Posterior cingulate gyrus (tissue), 11 donors: ENCODE measurements at regions of chr6 and their contacts with region 1.

Region 1: DNA sequence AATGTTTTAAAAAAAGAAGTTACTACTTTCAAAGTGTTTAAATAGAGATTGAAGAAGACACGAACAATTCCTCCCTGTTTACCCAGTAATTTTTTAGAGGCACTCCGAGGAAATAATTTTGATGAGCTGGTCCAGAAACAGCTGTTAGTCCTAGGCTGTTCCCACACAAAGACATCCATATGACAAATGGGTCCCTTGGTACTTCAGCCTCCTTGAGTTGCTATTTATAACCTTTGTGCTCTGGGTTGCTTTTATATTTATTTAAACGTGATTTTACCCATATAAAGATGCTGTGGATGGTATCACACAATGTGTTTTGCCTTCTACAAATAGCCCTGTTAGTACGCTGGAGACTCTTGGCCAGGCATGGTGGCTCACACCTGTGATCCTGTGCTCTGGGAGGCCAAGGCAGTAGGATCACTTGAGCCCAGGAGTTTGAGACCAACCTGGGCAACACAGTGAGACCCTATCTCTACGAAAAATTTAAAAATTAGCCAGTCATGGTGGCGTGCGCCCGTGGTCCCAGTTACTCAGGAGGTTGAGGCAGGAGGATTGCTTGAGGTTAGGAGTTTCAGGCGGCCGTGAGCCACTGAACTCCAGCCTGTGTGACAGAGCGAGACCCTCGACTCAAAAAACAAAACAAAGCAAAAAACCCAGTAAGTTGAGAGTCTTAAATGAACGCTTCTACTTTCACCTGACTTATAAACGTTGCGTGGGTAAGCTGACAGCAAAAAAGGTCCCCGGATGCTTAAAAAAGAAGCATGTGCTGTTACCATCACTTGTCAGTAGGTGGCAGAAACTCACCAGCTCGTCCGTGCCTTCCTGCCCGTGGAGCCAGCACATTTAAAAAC is 56.9 kb upstream of the ARMH2 start:
- DNase-seq: peak in 8 of 10 donors; percentile 34 to 93 (median 48)

Region 2: GRCh38 chr6:24910961-24911712 is 55.5 kb after region 1 on chr6:
- intact Hi-C with region 1: loop called (anchors 5 kb)
- DNase-seq: peak in 9 of 10 donors; percentile 44 to 95 (median 73)

Region 3: DNA sequence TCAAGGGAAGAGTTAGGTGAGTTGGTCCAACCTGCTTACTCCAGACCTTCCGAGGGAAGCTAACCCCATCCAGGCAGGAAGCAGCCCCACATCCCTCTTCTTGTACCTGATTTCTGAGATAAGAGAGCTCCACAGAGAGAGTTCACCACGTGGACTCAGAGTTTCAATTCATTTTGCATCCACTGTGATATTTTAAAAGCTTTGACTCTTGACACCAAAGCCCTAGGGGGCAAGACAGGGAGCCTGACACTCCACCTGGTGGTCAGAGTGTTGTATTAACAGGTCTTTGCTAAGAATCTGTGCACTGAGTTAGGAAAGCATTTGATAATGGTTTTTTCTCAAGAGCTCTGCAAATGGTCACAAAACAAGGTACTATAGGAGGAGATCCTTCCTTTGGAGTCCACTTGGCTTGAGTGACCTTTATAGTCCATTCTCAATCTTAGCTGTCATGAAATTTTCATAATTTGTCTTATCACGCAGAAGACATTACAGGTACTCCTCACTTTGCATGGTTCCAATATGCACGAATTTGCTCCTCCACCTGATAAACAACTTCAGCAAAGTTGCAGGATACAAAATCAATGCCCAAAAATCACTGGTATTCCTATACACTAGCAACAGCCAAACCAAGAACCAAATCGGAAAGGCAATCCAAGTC is 136.3 kb after region 1 on chr6:
- intact Hi-C with region 1: loop called (anchors 5 kb)
- DNase-seq: peak in 1 of 10 donors; percentile 11

Region 4: GRCh38 chr6:25017932-25018567 is 162.4 kb after region 1 on chr6:
- intact Hi-C with region 1: loop called (anchors 2 kb)
- DNase-seq: peak in 1 of 10 donors; percentile 35

Region 5: DNA sequence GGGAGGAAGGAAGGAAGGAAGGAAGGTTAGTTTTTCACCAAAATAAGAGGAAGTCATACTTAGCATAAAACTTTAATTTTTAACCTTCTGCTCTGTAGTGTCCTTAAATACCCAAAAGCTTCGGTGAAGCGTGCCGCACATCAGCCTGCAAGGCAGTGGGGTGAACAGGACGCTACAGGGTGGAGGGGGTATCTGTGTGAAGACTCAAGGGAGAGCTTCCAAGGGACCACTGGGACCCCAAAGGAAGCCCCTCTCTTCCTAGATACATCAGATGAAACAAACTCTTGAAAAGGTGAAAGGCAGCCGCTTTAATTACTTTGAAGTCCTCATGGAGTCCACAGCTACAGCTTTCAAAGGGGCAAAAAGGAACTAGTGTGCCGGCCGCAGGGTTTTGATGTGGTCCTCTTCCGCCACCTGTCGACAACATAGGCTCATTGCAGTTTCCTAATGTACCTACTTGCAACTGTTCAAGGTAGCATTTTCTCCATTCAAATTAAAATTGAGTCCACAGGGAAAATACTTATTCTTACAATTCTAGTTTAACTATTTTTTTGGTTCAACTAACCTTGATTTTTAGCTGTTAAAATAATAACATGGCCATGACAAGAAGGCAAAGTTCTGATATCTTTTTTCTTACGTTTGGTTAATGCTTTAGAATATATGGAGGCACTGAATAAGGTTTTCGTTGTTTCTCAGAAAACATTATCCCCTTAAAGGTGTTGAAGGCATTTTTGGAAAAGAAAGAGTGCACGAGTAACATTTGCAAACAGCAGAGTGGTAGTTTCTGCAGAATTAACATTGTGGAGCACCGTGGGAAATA is 215.1 kb after region 1 on chr6:
- intact Hi-C with region 1: loop called (anchors 1 kb)
- DNase-seq: peak; percentile 47 to 93 (median 78)

Region 6: GRCh38 chr6:25377664-25378063 is 522.0 kb after region 1 on chr6:
- intact Hi-C with region 1: no loop called
- DNase-seq: no peak